ENCODE measurements at regions of chr11 and their contacts with region 1.

Region 1: DNA sequence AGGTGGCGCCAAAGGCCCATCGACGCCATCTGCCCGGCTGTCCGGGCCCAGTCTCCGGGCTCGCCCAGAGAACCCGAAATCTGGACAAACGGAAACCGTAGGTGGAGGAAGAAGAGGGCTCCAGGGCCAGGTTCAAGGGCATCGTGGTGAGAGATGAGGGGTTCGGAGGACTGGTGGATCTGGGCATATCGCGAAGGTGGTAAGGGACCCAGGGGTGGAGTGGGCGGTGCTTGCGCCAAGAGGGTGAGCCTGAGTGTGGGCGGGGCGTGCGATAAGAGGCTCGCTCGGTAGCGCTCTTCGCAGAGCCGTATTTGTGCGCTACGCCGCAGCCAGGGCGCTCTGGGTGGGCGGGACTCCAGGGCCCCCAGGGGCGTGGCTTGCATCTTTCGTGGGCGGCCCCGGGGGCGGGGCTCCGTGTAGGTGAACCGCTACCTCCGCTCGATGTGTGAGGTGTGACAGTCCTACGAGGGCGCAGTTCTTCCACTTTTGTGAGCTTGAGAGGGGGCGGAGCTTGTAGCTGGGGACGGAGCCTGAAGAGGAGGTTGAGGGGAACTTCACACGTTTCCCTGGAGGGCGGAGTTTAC is 4.8 kb downstream of the CD248 start:
- DNase-seq: peak; percentile 97
- ATAC-seq: peak; percentile 83

Region 2: GRCh38 chr11:66328307-66329144 is 16.5 kb after region 1 on chr11:
- intact Hi-C with region 1: loop called (anchors 1 kb)
- DNase-seq: peak; percentile 86
- ATAC-seq: peak; percentile 75

Region 3: DNA sequence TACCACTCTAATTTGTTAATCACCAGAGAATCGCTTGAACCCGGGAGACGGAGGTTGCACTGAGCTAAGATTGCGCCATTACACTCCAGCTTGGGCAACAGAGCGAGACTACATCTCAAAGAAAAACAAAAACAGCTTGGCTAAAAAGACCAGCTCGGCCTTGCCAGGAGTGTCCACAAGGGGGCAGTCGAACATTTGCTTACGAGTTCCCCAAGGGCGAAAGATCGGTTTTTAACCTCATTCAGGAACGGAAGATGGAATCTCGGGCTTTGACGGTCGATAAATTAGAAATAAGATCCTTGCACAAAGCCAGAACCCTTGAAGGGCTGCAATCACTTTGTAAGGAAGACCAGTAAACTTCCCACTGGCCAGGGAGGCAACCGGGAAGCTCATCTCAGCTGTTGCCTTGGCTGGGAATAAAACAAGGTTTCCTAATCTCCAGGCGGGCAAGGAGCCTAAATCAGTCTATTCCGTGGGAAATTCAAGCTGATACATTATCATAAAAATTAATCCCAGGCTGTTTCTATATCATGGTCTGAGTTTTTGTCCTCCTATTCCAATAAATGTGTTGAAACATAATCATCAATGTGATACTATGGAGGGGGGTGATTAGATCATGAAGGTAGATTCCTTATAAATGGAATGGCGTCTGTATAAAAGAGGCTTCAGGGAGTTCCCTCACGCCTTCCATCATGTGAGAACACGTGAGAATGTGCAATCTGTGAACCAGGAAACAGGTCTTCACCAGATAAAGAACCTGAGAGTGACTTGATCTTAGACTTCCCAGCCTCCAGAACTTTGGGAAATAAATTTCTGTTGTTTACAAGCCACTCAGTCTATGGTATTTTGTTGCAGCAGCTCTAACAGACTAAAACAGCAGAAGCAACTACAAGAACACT is 74.4 kb after region 1 on chr11:
- intact Hi-C with region 1: loop called (anchors 5 kb)
- DNase-seq: peak; percentile 89
- ATAC-seq: peak; percentile 76

Measured in left ventricle myocardium superior (tissue), 1 donor.